ENCODE measurements at regions of chr1 and their contacts with region 1.

Region 1: GRCh38 chr1:37883671-37884070 is 24.3 kb upstream of the MTF1 start:
- DNase-seq: no peak
- ATAC-seq: no peak

Region 2: DNA sequence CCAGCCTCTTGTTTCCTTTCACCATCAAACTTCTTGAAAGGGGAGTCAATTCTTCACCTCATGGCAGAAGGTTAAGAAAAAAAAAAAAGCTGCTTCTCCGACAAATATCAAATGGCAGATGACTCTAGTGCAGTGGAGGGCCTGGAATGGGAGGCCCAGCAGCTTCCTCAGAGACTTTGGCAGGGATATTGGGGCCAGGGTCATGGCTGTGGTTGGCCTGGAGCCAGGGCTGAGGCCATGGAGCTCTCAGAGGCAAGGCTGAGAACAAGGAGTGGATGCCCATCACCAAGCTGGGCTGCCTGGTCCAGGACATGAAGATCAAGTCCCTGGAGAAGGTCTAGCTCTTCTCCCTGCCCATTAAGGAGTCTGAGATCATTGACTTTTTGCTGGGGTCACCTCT is 43.0 kb before region 1 on chr1:
- intact Hi-C with region 1: no loop called
- DNase-seq: no peak
- ATAC-seq: no peak

Region 3: DNA sequence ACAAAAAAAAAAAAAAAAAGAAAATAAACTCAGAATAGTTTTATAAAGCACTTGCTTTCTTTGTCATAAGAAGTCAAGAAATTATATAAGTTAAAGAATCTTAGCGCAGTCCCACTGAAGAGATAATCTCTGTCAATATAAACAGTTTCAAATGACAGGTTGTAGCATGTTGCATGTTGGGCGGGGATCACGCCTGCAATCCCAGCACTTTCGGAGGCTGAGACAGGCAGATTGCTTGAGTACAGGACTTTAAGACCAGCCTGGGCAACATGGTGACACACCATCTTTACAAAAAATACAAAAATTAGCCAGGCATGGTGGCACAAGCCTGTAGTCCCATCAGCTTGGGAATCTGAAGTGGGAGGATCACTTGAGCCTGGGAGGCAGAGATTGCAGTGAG is 81.6 kb after region 1 on chr1:
- intact Hi-C with region 1: loop called (anchors 10 kb)
- DNase-seq: no peak
- ATAC-seq: no peak